ENCODE measurements at regions of chr18 and their contacts with region 1.

Region 1: DNA sequence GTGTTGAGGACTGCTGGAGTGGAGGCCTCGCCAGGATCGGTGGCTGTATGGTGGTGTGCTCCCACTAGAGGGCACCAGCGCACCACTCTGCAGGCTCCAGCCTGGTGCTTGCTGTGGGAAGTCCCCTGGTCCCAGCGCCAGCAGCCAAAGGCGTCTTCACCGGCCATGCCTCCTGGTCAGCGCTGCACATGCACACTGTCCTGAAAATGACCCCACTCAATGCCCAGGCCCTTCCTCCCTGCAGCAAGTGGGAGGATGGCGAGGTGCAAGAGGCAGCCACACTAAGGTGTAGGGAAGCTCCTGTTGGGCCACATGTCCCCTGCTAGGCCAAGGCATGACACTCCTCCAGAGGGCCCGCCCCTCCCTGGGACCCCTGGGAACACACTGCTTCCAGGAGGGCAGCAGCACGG is 136.5 kb downstream of the CTIF start:
- DNase-seq: peak; percentile 92
- ATAC-seq: peak; percentile 97
- H3K4me3 ChIP-seq: no peak overlapping the region
- H3K27ac ChIP-seq: no peak overlapping the region
- H3K4me1 ChIP-seq: peaks cover 23% of the 10 kb centered on the region
- H3K27me3 ChIP-seq: no peaks in the 10 kb centered on the region
- CTCF ChIP-seq: peak; percentile 95

Region 2: GRCh38 chr18:48410095-48410920 is 265.0 kb before region 1 on chr18:
- intact Hi-C with region 1: no loop called
- DNase-seq: peak; percentile 97
- ATAC-seq: peak; percentile 97
- H3K4me3 ChIP-seq: peak overlapping the region; percentile 75
- H3K27ac ChIP-seq: peak overlapping the region; percentile 61
- H3K4me1 ChIP-seq: peaks cover 14% of the 10 kb centered on the region
- H3K27me3 ChIP-seq: peaks cover 28% of the 10 kb centered on the region
- CTCF ChIP-seq: no peak

Region 3: GRCh38 chr18:48949606-48950470 is 274.5 kb after region 1 on chr18:
- intact Hi-C with region 1: loop called (anchors 10 kb)
- DNase-seq: peak; percentile 85
- ATAC-seq: peak; percentile 51
- H3K4me3 ChIP-seq: peak overlapping the region; percentile 83
- H3K27ac ChIP-seq: peak overlapping the region; percentile 95
- H3K4me1 ChIP-seq: peaks cover 50% of the 10 kb centered on the region
- H3K27me3 ChIP-seq: no peaks in the 10 kb centered on the region
- CTCF ChIP-seq: peak; percentile 24

Region 4: DNA sequence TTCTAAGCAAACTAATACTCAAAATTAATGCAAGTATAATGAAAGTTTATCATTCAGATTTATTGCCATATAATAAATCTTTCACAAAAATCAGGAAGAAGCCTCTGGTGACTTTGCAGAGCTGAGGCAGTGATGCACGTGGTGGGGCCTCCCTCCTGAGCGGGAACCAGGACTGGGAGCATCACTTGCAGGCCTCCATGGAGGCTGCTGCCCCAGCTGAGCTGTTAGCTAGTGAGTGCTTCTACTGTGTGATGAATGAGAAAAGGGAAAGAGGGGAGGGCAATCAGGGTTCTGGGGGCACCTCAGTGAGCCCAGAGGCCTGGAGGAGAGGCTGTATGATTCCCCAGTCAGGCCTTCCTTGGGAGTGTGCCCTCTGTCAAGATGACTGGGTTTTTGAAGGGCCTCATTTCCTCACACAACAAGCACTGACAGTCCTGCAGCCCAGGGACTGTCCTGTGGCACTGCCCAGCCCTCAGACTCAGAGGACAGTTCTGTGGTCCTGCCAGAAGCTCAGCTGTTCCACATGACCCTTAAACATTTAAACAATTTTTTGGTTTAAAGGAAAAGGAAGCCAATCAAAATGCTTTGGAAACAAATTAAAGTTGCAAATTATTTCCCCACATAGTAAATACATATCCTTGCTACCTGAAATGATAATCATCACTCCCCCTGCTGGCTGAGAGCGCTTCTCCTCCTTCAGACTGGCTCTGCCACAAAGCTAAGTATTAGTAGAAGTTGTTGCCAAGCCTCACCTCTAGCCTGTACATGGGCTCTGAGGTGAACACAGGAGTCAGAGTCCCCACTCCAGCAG is 366.3 kb after region 1 on chr18:
- intact Hi-C with region 1: no loop called
- DNase-seq: no peak
- ATAC-seq: peak; percentile 87
- H3K4me3 ChIP-seq: no peak overlapping the region
- H3K27ac ChIP-seq: no peak overlapping the region
- H3K4me1 ChIP-seq: peaks cover 8% of the 10 kb centered on the region
- H3K27me3 ChIP-seq: no peaks in the 10 kb centered on the region
- CTCF ChIP-seq: peak; percentile 63

Measured in upper lobe of right lung (tissue), 1 donor.